Body of pancreas (tissue), 4 donors: ENCODE measurements at regions of chr6 and their contacts with region 1.

Region 1: DNA sequence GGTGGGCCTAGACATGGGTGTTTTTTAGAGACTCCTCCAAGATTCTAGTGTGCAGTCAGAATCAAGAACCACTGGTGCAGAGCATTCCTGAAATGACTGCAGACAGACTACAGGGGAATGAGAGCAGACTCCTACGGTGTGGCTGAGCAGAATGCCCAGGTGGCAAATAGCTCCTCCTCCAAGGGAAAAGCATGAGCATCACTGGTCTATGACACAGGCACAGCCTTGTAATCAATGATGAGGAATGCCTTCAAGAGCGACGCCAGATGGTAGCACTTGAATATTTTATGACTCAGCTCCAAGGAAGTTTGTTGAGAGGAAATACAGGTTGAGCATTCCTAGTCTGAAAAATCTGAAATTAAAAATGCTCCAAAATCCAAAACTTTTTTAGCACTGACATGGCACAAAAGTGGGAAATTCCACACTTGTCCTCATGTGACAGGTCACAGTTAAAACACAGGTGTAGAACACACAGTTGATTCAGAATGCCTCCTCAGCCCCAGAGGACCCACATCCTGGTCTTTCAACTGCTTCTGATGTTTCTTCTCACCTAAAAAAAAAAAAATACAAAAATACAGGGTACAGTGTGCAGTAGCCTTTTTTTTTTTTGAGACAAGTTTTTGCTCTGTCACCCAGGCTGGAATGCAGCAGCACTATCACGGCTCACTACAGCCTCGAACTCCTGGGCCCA is 10.6 kb upstream of the FAM8A1 start:
- DNase-seq: peak in 1 of 4 donors; percentile 13
- ATAC-seq: no peak
- H3K4me3 ChIP-seq: no peak overlapping the region
- H3K27ac ChIP-seq: no peak overlapping the region
- H3K4me1 ChIP-seq: no peaks in the 10 kb centered on the region
- H3K27me3 ChIP-seq: no peaks in the 10 kb centered on the region
- CTCF ChIP-seq: no peak
- POLR2A ChIP-seq: no peak

Region 2: GRCh38 chr6:17161076-17161475 is 428.5 kb before region 1 on chr6:
- intact Hi-C with region 1: loop called (anchors 5 kb)
- DNase-seq: no peak
- ATAC-seq: no peak
- H3K4me3 ChIP-seq: no peak overlapping the region
- H3K27ac ChIP-seq: no peak overlapping the region
- H3K4me1 ChIP-seq: peaks cover 6% of the 10 kb centered on the region
- H3K27me3 ChIP-seq: no peaks in the 10 kb centered on the region
- CTCF ChIP-seq: no peak
- POLR2A ChIP-seq: no peak

Region 3: GRCh38 chr6:17706580-17707370 is 117.2 kb after region 1 on chr6 and contains the start of gene NUP153:
- intact Hi-C with region 1: no loop called
- DNase-seq: peak; percentile 99
- ATAC-seq: peak; percentile 88
- H3K4me3 ChIP-seq: peak within 1 kb of the TSS; percentile 72 to 91
- H3K27ac ChIP-seq: peak within 1 kb of the TSS; percentile 95 to 100 (median 100)
- H3K4me1 ChIP-seq: peaks cover 38% of the 10 kb centered on the region
- H3K27me3 ChIP-seq: no peaks in the 10 kb centered on the region
- CTCF ChIP-seq: peak in 2 of 7 experiments; percentile 2 to 22
- POLR2A ChIP-seq: peak; percentile 95 to 96 (median 96)
- total RNA-seq, gene NUP153: 15.8 to 20.8 TPM